A673 (cell line): ENCODE measurements at regions of chr14 and their contacts with region 1.

Region 1: GRCh38 chr14:49892636-49893308 is at the start of gene ARF6:
- DNase-seq: peak; percentile 98
- H3K4me3 ChIP-seq: peak within 1 kb of the TSS; percentile 84
- H3K27ac ChIP-seq: peak within 1 kb of the TSS; percentile 99
- H3K4me1 ChIP-seq: peaks cover 15% of the 10 kb centered on the region
- H3K27me3 ChIP-seq: no peaks in the 10 kb centered on the region
- CTCF ChIP-seq: no peak; the same call in 1 of the 2 replicates
- total RNA-seq, gene ARF6: 59.2 and 67.6 TPM in 2 replicates

Region 2: GRCh38 chr14:48771717-48772116 is 1121.1 kb before region 1 on chr14:
- CTCF ChIA-PET with region 1: no interaction called
- POLR2A ChIA-PET with region 1: no interaction called
- intact Hi-C with region 1: no loop called
- DNase-seq: no peak
- H3K4me3 ChIP-seq: no peak overlapping the region
- H3K27ac ChIP-seq: no peak overlapping the region
- H3K4me1 ChIP-seq: no peaks in the 10 kb centered on the region
- H3K27me3 ChIP-seq: no peaks in the 10 kb centered on the region
- CTCF ChIP-seq: no peak

Region 3: DNA sequence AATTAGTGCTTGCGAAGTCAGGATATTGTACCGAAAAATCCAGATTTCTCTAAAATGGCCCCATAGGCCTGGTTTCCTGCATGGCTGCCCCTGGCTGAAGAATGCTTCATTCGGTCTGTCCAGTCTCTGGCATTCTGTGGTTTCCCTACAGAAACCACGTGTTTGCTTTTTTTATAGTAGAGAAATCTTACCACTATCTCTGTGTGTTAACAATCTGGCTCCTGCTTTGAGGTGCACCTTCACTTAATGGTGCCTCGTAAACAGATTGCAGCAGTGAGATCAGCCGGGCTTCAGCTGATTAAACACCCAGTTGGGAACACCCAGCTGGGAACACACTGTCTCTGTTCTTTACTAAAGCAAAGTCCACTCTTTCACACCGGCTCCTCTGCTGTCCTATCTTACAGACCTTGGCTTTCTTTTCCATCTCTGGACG is 251.1 kb before region 1 on chr14:
- CTCF ChIA-PET with region 1: no interaction called
- POLR2A ChIA-PET with region 1: interaction called, 21 read pairs
- intact Hi-C with region 1: no loop called
- DNase-seq: no peak
- H3K4me3 ChIP-seq: no peak overlapping the region
- H3K27ac ChIP-seq: no peak overlapping the region
- H3K4me1 ChIP-seq: peaks cover 6% of the 10 kb centered on the region
- H3K27me3 ChIP-seq: no peaks in the 10 kb centered on the region
- CTCF ChIP-seq: no peak

Region 4: GRCh38 chr14:49692811-49693734 is 199.7 kb before region 1 on chr14 and contains the start of gene KLHDC1:
- CTCF ChIA-PET with region 1: no interaction called
- POLR2A ChIA-PET with region 1: no interaction called
- intact Hi-C with region 1: no loop called
- DNase-seq: peak; percentile 88
- H3K4me3 ChIP-seq: peak within 1 kb of the TSS; percentile 62
- H3K27ac ChIP-seq: peak within 1 kb of the TSS; percentile 90
- H3K4me1 ChIP-seq: peaks cover 5% of the 10 kb centered on the region
- H3K27me3 ChIP-seq: no peaks in the 10 kb centered on the region
- CTCF ChIP-seq: no peak
- total RNA-seq, gene KLHDC1: 1.3 TPM in 2 replicates

Region 5: DNA sequence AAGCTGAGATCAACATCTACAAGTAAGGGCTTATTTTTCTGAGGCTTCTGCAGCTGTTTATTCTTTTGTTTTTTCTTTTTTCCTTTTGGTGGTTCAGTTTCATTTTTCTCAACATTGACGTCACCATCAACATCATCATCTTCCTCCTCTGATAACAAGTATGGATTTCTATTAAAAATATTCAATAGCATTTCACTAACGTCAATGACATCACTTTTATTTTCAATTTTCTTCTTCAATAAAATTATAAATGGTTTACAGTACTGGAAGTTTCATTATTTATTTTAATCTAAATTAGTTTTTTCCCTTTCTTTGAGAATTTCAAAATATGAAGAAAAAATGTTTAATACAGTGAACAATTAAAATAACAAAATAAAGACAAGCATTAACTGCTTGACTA is 64.1 kb before region 1 on chr14:
- CTCF ChIA-PET with region 1: no interaction called
- POLR2A ChIA-PET with region 1: no interaction called
- intact Hi-C with region 1: no loop called
- DNase-seq: no peak
- H3K4me3 ChIP-seq: no peak overlapping the region
- H3K27ac ChIP-seq: no peak overlapping the region
- H3K4me1 ChIP-seq: no peaks in the 10 kb centered on the region
- H3K27me3 ChIP-seq: no peaks in the 10 kb centered on the region
- CTCF ChIP-seq: no peak

Region 6: DNA sequence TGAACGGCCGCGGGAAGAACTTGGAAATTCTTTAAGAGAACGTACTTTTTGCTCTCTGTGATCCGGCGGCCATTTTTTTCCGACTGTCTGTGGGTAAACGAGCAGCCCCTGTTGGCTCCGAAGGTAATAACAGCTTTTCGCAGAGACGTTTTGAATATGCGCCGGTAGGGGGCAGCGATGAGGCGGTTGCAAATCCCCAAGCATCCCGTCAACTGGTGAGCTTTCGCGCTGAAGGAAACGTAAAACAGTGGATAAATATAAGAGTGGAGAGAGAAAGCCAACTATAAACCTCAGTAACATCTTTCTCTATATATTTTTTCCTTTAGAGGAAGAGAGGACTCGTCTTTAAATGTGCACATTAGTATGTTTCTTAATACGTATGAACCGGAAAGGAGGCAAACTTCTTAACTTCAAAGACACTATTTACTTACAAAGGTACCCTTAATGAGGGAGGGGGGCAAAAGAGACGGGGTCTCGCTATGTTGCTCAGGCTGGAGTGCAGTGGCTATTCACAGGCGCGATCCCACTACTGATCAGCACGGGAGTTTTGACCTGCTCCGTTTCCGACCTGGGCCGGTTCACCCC is 30.6 kb before region 1 on chr14:
- CTCF ChIA-PET with region 1: interaction called, 12 read pairs
- POLR2A ChIA-PET with region 1: no interaction called
- intact Hi-C with region 1: loop called (anchors 2 kb)
- DNase-seq: peak; percentile 95
- H3K4me3 ChIP-seq: peak overlapping the region; percentile 58
- H3K27ac ChIP-seq: peak overlapping the region; percentile 93
- H3K4me1 ChIP-seq: peaks cover 11% of the 10 kb centered on the region
- H3K27me3 ChIP-seq: no peaks in the 10 kb centered on the region
- CTCF ChIP-seq: peak; percentile 100

Region 7: DNA sequence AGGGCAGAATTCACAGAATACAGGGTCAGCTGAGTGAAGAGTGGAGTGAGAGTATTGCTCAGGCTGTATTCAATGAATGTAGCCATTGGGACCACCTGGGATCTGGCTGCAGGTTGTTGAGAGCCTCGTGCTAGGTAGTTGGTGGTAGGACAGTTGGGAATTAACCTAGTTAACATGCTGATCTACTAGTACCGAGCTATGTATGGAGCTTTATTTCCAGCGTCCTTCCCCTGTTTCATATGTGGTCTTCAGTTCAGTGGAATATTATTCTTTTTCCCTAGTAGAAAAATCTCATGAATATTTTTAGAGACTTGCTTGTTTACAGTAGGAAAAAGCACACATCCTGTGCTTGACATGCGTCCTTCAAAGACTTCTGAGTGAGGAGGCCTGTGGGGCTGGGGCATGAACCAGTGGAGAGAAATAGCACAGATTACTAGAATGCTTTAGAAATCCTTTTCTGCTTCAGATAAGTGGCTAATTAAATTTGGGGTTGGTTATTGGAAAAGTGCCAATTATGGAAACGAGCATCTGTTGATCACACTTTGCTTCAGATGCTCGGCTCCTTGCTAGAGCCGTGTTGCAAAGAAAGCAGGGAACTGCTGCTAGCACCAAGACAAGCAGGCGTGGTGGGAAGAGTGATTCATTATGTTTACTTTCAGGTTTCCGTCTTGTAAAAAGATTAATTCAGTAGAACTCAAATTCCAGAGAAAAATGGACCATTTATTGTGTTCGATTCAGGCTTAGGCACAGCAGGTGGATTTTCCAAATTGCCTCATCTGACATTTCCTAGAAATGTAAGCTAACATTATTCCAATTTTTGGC is 53.8 kb after region 1 on chr14:
- CTCF ChIA-PET with region 1: no interaction called
- POLR2A ChIA-PET with region 1: no interaction called
- intact Hi-C with region 1: loop called (anchors 2 kb)
- DNase-seq: peak; percentile 94
- H3K4me3 ChIP-seq: peak overlapping the region; percentile 3
- H3K27ac ChIP-seq: peak overlapping the region; percentile 51
- H3K4me1 ChIP-seq: peaks cover 44% of the 10 kb centered on the region
- H3K27me3 ChIP-seq: no peaks in the 10 kb centered on the region
- CTCF ChIP-seq: no peak